Mammary epithelial cell (primary cell): ENCODE measurements at regions of chr18 and their contacts with region 1.

Region 1: GRCh38 chr18:26548429-26549262 is at the start of gene KCTD1:
- DNase-seq: peak; percentile 81
- H3K4me3 ChIP-seq: peak within 1 kb of the TSS; percentile 74 to 95 (median 89)
- H3K27ac ChIP-seq: peak within 1 kb of the TSS; percentile 80
- H3K4me1 ChIP-seq: peaks cover 25% of the 10 kb centered on the region
- H3K27me3 ChIP-seq: no peaks in the 10 kb centered on the region
- CTCF ChIP-seq: no peak
- total RNA-seq, gene KCTD1: 35.3 to 64.6 TPM

Region 2: DNA sequence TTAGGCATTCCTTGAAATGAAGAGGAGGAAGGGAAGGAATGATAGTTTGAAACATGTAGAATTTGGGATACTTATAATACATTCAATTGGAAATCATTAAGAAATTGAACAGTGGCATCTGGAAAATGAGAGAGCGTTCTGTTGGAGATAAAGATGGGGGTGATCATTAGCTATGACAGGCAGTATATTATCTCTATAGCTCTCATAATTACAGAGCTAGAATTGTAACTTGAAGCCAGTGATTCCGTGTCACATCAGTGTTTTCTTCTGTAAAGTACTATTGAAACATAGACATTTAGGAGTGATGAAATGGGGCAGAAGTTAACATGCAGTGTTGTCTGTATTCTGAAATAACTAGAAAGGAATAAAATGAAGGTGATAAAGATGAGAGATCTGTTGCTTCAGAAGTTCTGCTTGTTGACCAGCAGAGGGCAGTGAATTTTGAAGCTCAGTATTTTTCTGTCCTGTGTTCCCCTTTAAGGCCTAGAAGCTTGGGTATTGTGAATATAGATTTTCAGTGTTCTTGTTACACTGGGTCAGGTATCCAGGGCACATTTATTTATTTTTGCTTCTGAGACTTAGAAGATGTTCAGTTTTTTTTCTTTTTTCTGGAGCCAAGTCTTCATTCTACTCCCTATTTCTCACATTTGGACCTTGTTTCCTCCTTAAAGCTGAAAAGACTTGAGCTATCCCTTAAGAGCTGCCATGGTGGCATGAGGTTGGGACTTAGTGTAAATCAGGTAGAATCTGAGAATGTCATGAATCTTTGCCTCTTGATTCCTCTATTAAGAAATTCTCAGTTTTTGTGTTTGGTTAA is 165.0 kb before region 1 on chr18:
- CTCF ChIA-PET with region 1: interaction called, 5 read pairs
- dilution Hi-C with region 1: no loop called
- in situ Hi-C with region 1: no loop called
- intact Hi-C with region 1: loop called (anchors 2 kb)
- DNase-seq: peak; percentile 33
- H3K4me3 ChIP-seq: no peak overlapping the region
- H3K27ac ChIP-seq: no peak overlapping the region
- H3K4me1 ChIP-seq: peaks cover 14% of the 10 kb centered on the region
- H3K27me3 ChIP-seq: no peaks in the 10 kb centered on the region
- CTCF ChIP-seq: peak; percentile 70 to 71

Region 3: DNA sequence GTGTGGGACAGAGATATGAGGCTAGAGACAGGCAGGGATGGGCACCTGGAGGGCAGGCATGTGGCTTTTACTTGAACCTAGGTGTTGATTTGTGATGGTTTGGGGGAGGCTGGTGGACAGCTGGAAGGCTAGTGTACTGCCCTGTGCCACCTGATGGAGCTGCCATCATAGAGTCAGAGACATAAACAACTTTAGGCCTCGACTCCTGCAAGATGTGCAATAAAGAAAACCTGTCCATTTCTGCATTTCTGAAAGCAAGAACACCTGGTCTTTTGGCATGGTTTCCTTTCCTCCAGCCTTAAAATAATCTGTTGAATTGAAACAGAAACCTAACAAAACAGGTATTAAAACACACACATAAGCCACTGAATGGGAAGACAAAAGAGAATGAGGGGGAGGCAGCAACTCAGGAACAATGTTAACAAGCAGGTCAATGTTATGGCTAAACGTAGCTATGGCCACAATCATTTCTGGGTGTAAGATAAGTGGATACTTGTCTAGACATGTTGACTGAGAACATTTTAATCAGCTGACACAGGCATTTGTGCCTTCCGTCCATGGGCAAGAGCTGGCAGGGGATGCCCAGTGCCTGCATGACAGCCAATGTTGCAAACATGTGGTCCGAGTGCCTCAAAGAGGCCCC is 88.1 kb before region 1 on chr18:
- CTCF ChIA-PET with region 1: no interaction called
- dilution Hi-C with region 1: no loop called
- in situ Hi-C with region 1: no loop called
- intact Hi-C with region 1: loop called (anchors 2 kb)
- DNase-seq: peak; percentile 92
- H3K4me3 ChIP-seq: no peak overlapping the region
- H3K27ac ChIP-seq: peak overlapping the region; percentile 89
- H3K4me1 ChIP-seq: peaks cover 36% of the 10 kb centered on the region
- H3K27me3 ChIP-seq: no peaks in the 10 kb centered on the region
- CTCF ChIP-seq: no peak

Region 4: DNA sequence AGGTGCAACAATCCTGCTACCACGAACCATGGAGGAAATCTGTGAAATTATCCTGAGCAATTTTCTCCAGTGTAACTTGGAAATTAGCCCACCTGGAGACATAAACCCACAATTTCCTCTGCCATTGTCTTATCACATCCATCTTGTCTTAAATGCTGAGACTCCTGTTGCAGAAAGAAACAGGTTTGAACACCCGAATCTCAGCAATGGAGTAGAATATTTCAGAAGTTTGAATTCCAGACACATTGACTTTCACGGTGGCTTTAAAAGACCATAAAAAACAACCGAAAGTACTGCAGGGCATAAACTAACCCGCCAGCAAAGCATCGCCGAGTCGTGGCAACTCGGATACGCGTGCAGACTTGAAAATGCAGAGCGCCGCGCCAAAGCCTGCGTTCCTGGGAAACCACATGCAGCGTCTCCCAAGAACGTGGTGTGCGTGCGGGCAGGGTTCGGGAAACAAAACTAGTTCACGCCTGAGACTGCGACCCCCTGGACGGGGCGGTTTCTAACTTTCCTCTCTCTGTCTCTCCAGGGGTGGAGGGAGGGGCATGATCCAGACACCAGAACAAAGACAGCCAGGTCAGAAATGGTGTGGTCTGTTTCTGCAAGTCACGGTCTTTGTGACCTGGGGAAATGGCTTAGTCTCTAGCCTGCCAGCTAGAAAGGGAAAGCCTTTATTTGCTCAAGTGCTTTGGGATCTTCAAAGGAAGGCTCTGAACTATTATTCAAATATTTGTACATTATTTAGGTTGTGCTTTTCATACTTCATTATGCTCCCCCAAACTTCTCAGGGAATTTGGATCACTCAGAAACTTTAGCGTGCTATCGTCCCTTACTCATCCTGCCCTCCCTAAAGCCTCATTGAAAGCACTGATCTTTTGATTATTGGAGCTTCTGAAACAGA is 26.6 kb after region 1 on chr18:
- CTCF ChIA-PET with region 1: interaction called, 5 read pairs
- dilution Hi-C with region 1: no loop called
- in situ Hi-C with region 1: no loop called
- intact Hi-C with region 1: loop called (anchors 2 kb)
- DNase-seq: peak; percentile 79
- H3K4me3 ChIP-seq: peak overlapping the region; percentile 30 to 49 (median 48)
- H3K27ac ChIP-seq: peak overlapping the region; percentile 84
- H3K4me1 ChIP-seq: peaks cover 21% of the 10 kb centered on the region
- H3K27me3 ChIP-seq: no peaks in the 10 kb centered on the region
- CTCF ChIP-seq: no peak

Region 5: DNA sequence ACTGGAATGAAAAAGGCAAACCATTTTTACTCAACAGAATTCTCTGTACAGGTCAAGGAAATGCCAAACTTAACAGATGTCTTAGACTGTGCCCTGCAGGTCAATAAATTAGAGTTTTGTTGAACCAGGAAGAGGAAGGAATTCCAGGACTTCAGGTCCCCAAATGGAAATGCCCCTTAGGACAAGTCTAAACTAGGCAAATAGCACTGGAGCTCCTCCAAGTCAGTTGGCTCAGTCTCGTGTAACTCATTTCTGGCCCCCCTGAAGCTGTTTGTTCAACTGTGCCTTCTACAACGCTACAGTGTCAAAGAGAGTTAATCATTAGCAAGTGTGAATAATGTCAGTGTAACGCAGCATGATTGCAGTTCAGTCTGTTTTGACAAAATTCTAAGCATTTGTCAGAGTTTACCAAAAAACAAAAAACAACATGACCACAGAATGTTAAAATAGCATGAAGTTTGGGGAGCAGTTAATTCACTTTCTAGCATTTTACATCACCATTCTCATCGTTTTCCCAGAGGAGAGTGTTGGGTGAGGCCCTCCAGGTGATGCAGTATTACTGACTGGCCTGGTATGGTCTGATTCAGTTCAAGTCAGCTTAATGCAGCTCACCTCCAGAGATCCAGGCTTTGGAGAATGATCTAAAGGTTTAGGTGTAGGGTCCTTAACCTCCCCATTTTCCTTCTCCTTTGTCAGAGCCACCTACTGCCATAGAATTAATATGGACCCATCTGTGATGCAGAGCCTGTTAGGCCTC is 208.8 kb after region 1 on chr18:
- CTCF ChIA-PET with region 1: no interaction called
- dilution Hi-C with region 1: no loop called
- in situ Hi-C with region 1: no loop called
- intact Hi-C with region 1: loop called (anchors 5 kb)
- DNase-seq: no peak
- H3K4me3 ChIP-seq: no peak overlapping the region
- H3K27ac ChIP-seq: no peak overlapping the region
- H3K4me1 ChIP-seq: peaks cover 4% of the 10 kb centered on the region
- H3K27me3 ChIP-seq: no peaks in the 10 kb centered on the region
- CTCF ChIP-seq: no peak

Region 6: DNA sequence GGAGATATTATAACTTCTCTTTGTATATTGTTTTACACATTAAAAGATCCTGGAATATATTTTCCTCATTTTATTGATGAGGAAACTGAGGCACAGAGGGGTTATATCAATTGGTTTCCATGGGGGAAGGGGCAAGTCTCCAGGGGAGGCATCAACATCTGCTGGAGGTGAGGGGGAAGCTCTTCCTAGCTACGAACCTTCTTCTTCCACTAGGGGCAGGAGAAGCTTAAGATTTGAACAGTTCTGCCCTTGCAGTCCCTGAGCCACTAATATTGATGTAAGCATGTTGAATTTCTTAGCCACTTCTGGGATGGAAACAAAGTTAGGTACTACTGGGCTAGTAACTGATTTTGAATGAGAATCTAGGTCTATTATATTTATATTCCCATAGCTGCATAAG is 456.9 kb after region 1 on chr18:
- CTCF ChIA-PET with region 1: no interaction called
- dilution Hi-C with region 1: no loop called
- in situ Hi-C with region 1: no loop called
- intact Hi-C with region 1: loop called (anchors 5 kb)
- DNase-seq: no peak
- H3K4me3 ChIP-seq: no peak overlapping the region
- H3K27ac ChIP-seq: no peak overlapping the region
- H3K4me1 ChIP-seq: no peaks in the 10 kb centered on the region
- H3K27me3 ChIP-seq: no peaks in the 10 kb centered on the region
- CTCF ChIP-seq: peak; percentile 50 to 54